Transverse colon (tissue), 4 donors: ENCODE measurements at regions of chr4 and their contacts with region 1.

Region 1: GRCh38 chr4:9704551-9705332 is 76.7 kb upstream of the DRD5 start:
- DNase-seq: peak; percentile 22
- H3K4me3 ChIP-seq: no peak overlapping the region
- H3K27ac ChIP-seq: no peak overlapping the region
- H3K4me1 ChIP-seq: peaks cover 0 to 17% (median 8%) of the 10 kb centered on the region in 4 donors
- H3K27me3 ChIP-seq: no peaks in the 10 kb centered on the region
- CTCF ChIP-seq: no peak
- EP300 ChIP-seq: no peak
- POLR2A ChIP-seq: no peak

Region 2: GRCh38 chr4:8058031-8058479 is 1646.7 kb before region 1 on chr4:
- in situ Hi-C with region 1: no loop called
- intact Hi-C with region 1: no loop called
- DNase-seq: no peak
- H3K4me3 ChIP-seq: no peak overlapping the region
- H3K27ac ChIP-seq: no peak overlapping the region
- H3K4me1 ChIP-seq: no peaks in the 10 kb centered on the region
- H3K27me3 ChIP-seq: no peaks in the 10 kb centered on the region
- CTCF ChIP-seq: no peak
- EP300 ChIP-seq: no peak
- POLR2A ChIP-seq: no peak

Region 3: GRCh38 chr4:8468746-8469535 is 1235.8 kb before region 1 on chr4:
- in situ Hi-C with region 1: no loop called
- intact Hi-C with region 1: no loop called
- DNase-seq: peak; percentile 55
- H3K4me3 ChIP-seq: no peak overlapping the region
- H3K27ac ChIP-seq: no peak overlapping the region
- H3K4me1 ChIP-seq: peaks cover 5 to 20% (median 12%) of the 10 kb centered on the region in 4 donors
- H3K27me3 ChIP-seq: no peaks in the 10 kb centered on the region
- CTCF ChIP-seq: peak; percentile 74 to 94 (median 85)
- EP300 ChIP-seq: no peak
- POLR2A ChIP-seq: no peak

Region 4: GRCh38 chr4:9859810-9860209 is 155.1 kb after region 1 on chr4:
- in situ Hi-C with region 1: no loop called
- intact Hi-C with region 1: no loop called
- DNase-seq: no peak
- H3K4me3 ChIP-seq: no peak overlapping the region
- H3K27ac ChIP-seq: no peak overlapping the region
- H3K4me1 ChIP-seq: no peaks in the 10 kb centered on the region
- H3K27me3 ChIP-seq: no peaks in the 10 kb centered on the region
- CTCF ChIP-seq: no peak
- EP300 ChIP-seq: no peak
- POLR2A ChIP-seq: no peak

Region 5: DNA sequence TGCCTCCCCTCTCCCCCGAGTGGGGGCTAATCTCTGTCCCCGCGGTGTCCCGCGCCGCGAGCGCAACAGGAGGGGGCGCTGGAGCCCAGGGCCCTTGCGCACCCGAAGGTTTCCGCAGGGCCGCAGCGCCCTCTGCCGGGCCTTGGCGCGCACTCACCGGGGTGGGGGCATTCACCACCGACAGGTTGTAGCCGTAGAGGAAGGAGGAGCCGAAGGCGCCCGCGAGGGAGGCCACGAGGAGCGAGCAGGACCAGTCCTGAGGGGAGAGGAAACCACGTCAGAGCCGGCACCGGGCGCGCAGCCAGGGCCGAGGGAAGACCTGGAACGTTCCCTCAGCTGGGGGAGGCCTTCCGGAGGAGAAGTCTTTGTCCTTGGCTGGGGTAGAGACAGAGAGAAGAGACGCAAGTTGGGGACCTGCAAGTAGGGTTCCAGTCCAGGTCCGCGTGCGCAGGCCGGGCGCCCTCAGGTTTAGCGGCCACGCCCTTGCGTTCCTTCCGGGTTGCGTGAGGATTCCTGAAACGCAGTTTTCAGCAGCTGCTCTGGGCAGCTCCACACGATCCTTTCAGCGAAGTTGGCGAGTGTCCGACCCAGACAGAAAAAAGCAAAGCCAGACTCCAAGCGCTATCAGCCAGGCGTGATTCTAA is 314.2 kb after region 1 on chr4:
- in situ Hi-C with region 1: loop called in 1 of 4 experiments (anchors 10 kb)
- intact Hi-C with region 1: no loop called
- DNase-seq: peak; percentile 97
- H3K4me3 ChIP-seq: peak overlapping the region in 3 of 4 donors; percentile 29 to 55 (median 31)
- H3K27ac ChIP-seq: peak overlapping the region; percentile 84 to 90 (median 88)
- H3K4me1 ChIP-seq: peaks cover 5 to 33% (median 12%) of the 10 kb centered on the region in 4 donors
- H3K27me3 ChIP-seq: no peaks in the 10 kb centered on the region
- CTCF ChIP-seq: peak; percentile 95 to 100 (median 99)
- EP300 ChIP-seq: no peak
- POLR2A ChIP-seq: peak; percentile 75